Activated T-helper 1 cell treated with anti-CD3 and anti-CD28 coated beads, Interleukin-12 subunit alpha, Interleukin-12 subunit beta, Interleukin-2, Interleukin-4 antibody, amounts not matched to agents 30 ng/mL and 10 ng/mL and 1 ng/mL, durations not matched to agents 14 hours and 24 hours and 36 hours (primary cell): ENCODE measurements at regions of chr5 and their contacts with region 1.

Region 1: GRCh38 chr5:177497292-177498033 is at the start of gene PDLIM7:
- DNase-seq: peak; percentile 92
- H3K4me3 Mint-ChIP-seq: peak within 1 kb of the TSS; percentile 78
- H3K27ac Mint-ChIP-seq: peak within 1 kb of the TSS; percentile 83
- H3K4me1 Mint-ChIP-seq: peaks cover 43% of the 10 kb centered on the region
- H3K27me3 Mint-ChIP-seq: peaks cover 16% of the 10 kb centered on the region
- total RNA-seq, gene PDLIM7: 49.2 and 49.9 TPM in 2 replicates

Region 2: GRCh38 chr5:177113566-177114424 is 383.7 kb before region 1 on chr5:
- intact Hi-C with region 1: loop called (anchors 2 kb)
- DNase-seq: peak; percentile 70
- H3K4me3 Mint-ChIP-seq: no peak overlapping the region
- H3K27ac Mint-ChIP-seq: peak overlapping the region; percentile 35
- H3K4me1 Mint-ChIP-seq: peaks cover 25% of the 10 kb centered on the region
- H3K27me3 Mint-ChIP-seq: no peaks in the 10 kb centered on the region

Region 3: DNA sequence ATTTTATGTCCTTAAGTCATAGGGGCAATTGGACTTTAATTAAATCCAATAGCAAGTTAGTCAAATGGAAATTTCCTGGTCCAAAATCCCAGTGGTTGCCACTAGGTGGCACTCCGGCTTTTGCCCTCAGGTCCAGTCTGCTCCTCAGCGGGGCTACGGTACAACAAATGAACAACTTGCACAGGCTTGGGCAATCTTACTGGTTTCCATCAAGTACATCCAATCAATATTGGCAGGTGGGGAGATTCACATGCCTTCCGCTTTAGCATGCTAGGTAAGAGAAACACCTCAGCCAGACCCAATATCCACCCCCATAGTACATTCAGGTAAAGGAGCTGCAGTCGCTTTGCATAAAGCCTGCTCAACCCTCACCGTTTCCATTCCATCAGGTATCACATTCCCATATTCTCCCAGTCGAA is 179.5 kb before region 1 on chr5:
- intact Hi-C with region 1: loop called (anchors 1 kb)
- DNase-seq: peak; percentile 61
- H3K4me3 Mint-ChIP-seq: no peak overlapping the region
- H3K27ac Mint-ChIP-seq: no peak overlapping the region
- H3K4me1 Mint-ChIP-seq: peaks cover 22% of the 10 kb centered on the region
- H3K27me3 Mint-ChIP-seq: no peaks in the 10 kb centered on the region

Region 4: GRCh38 chr5:177403792-177404640 is 93.4 kb before region 1 on chr5:
- intact Hi-C with region 1: loop called (anchors 1 kb)
- DNase-seq: peak; percentile 75
- H3K4me3 Mint-ChIP-seq: peak overlapping the region; percentile 84
- H3K27ac Mint-ChIP-seq: no peak overlapping the region
- H3K4me1 Mint-ChIP-seq: peaks cover 17% of the 10 kb centered on the region
- H3K27me3 Mint-ChIP-seq: peaks cover 34% of the 10 kb centered on the region

Region 5: DNA sequence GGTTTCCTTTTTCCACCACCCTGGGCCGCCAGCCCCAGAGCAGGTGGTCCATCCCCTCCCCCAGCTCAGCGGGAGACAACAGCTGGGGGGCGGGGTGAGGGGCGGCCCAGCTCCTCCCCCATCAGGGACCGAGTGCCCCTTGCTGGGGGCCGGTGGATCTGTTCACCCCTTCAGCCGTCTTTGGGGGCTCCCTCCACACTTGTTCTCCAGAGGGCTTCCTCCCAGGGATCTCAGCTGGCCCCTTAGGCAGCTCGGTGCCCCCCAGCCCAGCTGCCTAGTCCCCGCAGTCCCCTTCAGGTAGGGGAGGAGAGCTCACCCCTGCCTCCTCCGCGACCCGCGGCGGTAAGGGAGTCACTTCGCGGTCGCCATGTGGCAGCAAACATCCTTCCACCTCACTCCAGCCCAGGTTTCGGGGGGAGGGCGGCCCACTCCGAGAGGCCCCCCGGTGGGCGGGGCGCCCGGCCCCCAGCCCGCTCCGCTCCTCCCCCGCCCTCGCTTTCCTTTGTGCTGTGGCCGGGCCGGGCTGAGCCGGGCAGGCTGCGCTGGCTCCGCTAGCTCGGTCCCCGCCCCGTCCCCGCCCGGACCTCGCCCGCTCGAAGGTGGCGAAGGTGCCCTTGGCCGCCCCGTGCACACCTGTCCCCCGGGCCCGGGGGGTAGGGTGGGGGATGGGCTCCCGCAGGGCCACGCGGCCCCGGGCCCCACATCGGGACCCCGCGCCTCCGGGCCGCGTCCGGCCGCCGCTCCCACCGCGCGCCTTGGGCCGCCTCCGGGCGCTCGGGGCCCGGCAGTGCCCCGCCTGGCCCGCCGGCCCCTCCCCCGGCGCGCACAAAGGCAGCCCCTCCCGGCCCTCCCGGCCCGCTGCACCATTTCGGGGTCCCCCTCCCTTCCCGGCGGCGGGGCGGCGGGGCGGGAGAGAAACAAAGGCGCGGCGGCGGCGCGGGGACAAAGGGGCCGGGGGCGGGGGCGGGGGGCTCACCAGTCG is 24.7 kb before region 1 on chr5:
- intact Hi-C with region 1: loop called (anchors 1 kb)
- DNase-seq: no peak
- H3K4me3 Mint-ChIP-seq: peak overlapping the region; percentile 67
- H3K27ac Mint-ChIP-seq: no peak overlapping the region
- H3K4me1 Mint-ChIP-seq: peaks cover 31% of the 10 kb centered on the region
- H3K27me3 Mint-ChIP-seq: peaks cover 16% of the 10 kb centered on the region

Region 6: GRCh38 chr5:177554474-177555111 is 57.1 kb after region 1 on chr5 and contains the start of gene FAM193B:
- intact Hi-C with region 1: loop called (anchors 1 kb)
- DNase-seq: peak; percentile 94
- H3K4me3 Mint-ChIP-seq: peak within 1 kb of the TSS; percentile 88
- H3K27ac Mint-ChIP-seq: peak within 1 kb of the TSS; percentile 85
- H3K4me1 Mint-ChIP-seq: peaks cover 37% of the 10 kb centered on the region
- H3K27me3 Mint-ChIP-seq: no peaks in the 10 kb centered on the region
- total RNA-seq, gene FAM193B: 70.9 and 79.4 TPM in 2 replicates